HEK293 (cell line): ENCODE measurements at regions of chr9 and their contacts with region 1.

Region 1: DNA sequence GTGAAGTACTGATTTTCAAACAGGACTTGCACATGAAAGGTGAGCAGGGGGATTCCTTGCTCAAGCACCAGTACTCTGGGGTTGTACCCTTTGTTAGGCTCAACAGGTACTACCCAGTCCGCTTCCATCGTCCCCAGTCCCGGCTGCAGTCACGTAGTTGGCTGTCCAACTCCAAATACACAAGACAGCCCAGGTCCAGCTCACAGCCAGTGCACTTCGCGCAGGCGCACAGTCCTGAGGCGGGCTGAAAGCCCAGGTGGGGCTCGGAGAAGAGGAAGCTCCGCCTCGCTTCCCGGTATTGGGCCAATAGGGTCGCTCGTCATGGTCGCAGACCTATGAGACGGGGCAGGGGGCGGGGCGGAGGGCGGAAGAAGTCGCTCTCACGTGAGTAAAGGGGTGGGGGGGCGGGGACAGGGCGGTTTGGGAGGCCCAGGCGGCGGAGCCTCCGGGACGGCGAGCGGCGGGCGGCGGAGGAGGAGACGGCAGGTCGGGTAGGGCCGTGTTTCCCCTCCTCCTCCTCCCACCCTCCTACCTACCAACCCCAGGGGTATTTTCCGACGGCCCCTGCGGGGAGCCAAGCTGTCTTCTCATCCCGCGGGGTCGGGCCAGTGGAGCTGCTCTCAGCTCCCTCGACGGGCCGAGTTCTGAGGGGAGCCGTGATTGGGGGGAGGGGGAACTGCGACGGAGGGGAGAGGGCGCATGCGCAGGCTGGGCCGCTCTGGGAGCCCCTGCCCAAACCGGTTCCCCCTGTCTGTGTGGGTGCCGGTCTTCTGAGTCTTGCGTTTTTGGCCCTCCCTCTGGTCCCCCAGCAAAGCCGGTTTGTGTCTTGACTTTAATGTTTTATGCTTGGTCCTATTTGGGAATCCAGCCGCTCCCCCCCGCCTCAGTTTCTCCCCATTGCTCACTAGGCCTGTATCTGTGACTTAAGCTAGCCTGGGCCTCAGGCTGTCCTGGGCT is at the start of gene RABGAP1:
- H3K4me3 ChIP-seq: peak within 1 kb of the TSS; percentile 89
- H3K27ac ChIP-seq: peak within 1 kb of the TSS; percentile 58
- H3K4me1 ChIP-seq: no peaks in the 10 kb centered on the region
- CTCF ChIP-seq: no peak

Region 2: DNA sequence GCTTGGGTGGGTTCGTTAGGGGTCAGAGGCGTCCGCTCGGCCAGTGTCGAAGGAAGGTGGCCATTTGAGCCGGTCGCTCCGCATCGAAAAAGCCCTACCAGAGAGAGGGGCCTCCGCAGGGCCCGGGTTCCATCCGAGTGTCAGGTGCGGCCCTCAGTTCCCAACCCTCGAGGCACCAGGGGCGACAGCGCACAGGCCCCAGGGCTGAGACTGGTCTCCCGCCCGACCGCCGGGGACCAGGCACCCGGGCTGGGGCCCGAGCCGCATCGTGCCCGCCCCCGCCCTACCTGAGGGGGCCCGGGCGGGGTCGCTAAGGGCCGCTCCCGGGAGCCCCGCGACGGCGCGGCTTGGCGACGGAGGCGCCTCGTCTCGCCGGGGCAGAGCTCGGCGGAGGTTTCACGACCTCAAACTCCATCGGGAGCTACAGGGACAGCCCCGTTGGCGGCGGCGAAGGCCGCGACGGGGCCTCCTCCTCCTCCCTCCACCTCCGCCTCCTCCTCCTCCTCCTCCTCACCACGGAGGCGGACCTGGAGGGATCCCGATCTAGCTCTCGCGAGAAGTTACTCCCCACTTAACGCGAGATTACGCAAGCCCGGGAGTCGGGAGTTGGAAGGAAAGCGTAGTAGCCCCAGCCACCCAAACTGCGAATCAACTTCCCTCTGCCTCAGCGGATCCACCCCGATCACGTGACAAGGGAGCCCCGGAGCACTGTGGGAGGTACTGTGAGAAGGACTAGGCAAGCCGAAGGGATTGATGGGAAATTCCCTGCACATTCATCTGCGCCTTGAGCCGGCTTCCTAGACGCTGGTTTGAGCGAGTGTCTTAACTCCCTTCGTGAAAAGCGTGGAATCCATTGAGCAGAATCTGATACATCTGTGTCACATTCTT is 35.8 kb before region 1 on chr9 and contains the start of gene RC3H2:
- CTCF ChIA-PET with region 1: no interaction called
- POLR2A ChIA-PET with region 1: interaction called, 44 read pairs
- H3K4me3 ChIP-seq: peak within 1 kb of the TSS; percentile 94
- H3K27ac ChIP-seq: peak within 1 kb of the TSS; percentile 81
- H3K4me1 ChIP-seq: 0 out of 2 replicates have a peak, but pooled peaks cover 3% of the 10 kb centered on the region
- CTCF ChIP-seq: no peak

Region 3: DNA sequence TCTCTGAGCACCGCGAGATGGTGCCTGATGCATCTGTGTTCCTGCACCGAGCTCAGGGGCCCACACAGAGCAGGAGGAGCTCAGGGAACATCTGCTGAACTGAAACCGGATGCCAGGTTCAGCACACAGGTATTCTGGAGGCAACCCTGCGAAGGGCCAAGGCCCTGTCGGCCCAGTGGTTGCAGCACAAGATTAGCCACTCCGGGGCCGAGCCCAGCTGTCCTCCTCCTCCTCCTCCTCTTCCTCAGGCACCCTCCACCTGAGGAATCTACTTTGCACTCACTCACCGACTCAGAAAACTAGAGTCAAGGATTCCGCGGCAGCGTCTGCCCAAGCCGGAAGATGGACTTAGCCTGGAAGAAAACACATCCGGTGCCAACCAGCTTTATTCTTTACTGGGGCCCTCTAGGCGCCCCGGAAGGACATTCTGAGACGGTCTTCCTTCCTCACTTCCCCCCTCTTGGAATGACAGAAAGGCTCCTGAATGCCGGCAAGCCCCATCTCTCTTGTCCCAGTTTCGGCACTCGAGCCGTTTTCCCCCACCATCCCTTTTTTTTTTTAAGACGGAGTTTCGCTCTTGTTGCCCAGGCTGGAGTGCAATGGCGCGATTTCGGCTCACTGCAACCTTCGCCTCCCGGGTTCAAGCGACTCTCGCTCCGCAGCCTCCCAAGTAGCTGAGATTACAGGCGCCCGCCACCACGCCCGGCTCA is 27.8 kb before region 1 on chr9 and contains the start of gene ZBTB6:
- CTCF ChIA-PET with region 1: no interaction called
- POLR2A ChIA-PET with region 1: interaction called, 29 read pairs
- H3K4me3 ChIP-seq: peak within 1 kb of the TSS; percentile 97
- H3K27ac ChIP-seq: peak within 1 kb of the TSS; percentile 65
- H3K4me1 ChIP-seq: no peaks in the 10 kb centered on the region
- CTCF ChIP-seq: no peak

Region 4: GRCh38 chr9:122954253-122954691 is 13.4 kb after region 1 on chr9:
- CTCF ChIA-PET with region 1: interaction called, 3 read pairs
- POLR2A ChIA-PET with region 1: interaction called, 24 read pairs
- H3K4me3 ChIP-seq: no peak overlapping the region
- H3K27ac ChIP-seq: no peak overlapping the region
- H3K4me1 ChIP-seq: 0 out of 2 replicates have a peak, but pooled peaks cover 2% of the 10 kb centered on the region
- CTCF ChIP-seq: no peak

Region 5: DNA sequence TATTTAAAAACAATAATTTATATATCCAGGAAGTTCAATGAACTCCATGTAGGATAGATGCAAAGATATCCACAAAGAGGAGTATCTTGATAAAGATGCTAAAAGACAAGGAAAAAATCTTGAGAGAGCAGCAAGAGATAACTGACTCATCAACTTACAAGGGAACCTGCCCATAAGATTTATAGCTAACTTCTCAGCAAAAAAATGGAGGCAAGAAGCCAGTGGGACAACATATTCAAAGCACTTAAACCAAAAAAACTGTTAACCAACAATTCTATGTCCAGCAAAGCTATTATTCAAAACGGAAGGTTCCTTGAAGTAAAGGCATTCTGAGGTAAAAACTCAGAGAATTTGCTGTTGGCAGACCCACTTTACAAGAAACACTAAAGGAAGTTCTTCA is 20.3 kb after region 1 on chr9:
- CTCF ChIA-PET with region 1: interaction called, 3 read pairs
- POLR2A ChIA-PET with region 1: interaction called, 24 read pairs
- H3K4me3 ChIP-seq: no peak overlapping the region
- H3K27ac ChIP-seq: no peak overlapping the region
- H3K4me1 ChIP-seq: no peaks in the 10 kb centered on the region
- CTCF ChIP-seq: no peak